Mucosa of descending colon (tissue), 3 donors: ENCODE measurements at regions of chr3 and their contacts with region 1.

Region 1: GRCh38 chr3:72938471-72939265 is 50.8 kb downstream of the GXYLT2 start:
- DNase-seq: peak in 1 of 3 donors; percentile 27
- ATAC-seq: peak; percentile 82
- H3K4me3 ChIP-seq: no peak overlapping the region
- H3K4me1 ChIP-seq: no peaks in the 10 kb centered on the region
- CTCF ChIP-seq: no peak

Region 2: GRCh38 chr3:73056014-73056844 is 117.6 kb after region 1 on chr3:
- intact Hi-C with region 1: loop called (anchors 2 to 10 kb)
- DNase-seq: no peak
- ATAC-seq: peak; percentile 52
- H3K4me3 ChIP-seq: no peak overlapping the region
- H3K4me1 ChIP-seq: peaks cover 23% of the 10 kb centered on the region
- CTCF ChIP-seq: peak; percentile 11

Region 3: DNA sequence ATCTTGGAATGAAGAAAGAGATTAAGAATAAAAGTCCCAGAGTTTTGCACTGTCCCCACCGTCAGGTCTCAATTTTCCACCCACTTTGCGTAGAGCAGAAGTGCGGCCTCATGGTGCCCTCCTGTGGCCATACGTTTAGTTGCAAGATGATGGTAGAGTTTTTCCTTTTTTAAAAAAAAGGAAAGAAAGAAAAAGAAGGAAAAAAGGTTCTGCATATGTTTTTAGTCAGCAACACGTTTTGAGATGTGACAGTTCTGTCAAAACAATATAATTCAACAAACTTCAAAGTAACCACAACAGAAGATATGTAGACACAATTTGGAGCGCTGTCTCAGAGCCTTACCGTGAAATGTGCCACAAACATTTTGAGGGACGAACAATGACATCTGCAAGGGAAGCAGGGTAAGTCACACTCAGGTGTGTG is 147.4 kb after region 1 on chr3:
- intact Hi-C with region 1: loop called in 1 of 2 experiments (anchors 10 kb)
- DNase-seq: peak in 2 of 3 donors; percentile 60 to 67
- ATAC-seq: peak; percentile 73
- H3K4me3 ChIP-seq: no peak overlapping the region
- H3K4me1 ChIP-seq: no peaks in the 10 kb centered on the region
- CTCF ChIP-seq: peak; percentile 72

Region 4: GRCh38 chr3:73225991-73226390 is 287.3 kb after region 1 on chr3:
- intact Hi-C with region 1: no loop called
- DNase-seq: no peak
- ATAC-seq: no peak
- H3K4me3 ChIP-seq: no peak overlapping the region
- H3K4me1 ChIP-seq: no peaks in the 10 kb centered on the region
- CTCF ChIP-seq: no peak